ENCODE measurements at regions of chr6 and their contacts with region 1.

Region 1: DNA sequence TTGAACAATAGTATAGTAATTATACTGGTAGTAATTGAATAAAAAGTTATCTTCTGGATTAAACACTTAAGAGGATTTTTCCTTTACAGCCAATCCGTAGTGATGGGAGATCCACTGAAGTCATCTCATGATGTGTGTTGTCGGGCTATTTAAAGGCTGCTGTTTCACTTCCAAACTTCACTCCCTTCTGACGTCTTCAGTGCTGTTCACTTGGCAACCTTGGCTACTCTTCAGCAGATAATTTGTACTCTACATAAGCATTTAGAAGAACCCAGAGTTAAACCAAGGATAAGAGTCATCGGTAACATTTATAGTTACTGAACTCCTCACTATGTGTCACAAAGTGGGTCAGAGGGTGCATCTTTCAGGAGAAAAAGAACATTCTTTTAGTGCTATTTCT is 179.1 kb upstream of the EYA4 start:
- DNase-seq: no peak
- ATAC-seq: peak; percentile 95

Region 2: GRCh38 chr6:132456700-132457143 is 605.4 kb before region 1 on chr6:
- intact Hi-C with region 1: no loop called
- DNase-seq: peak; percentile 66
- ATAC-seq: peak; percentile 94

Region 3: GRCh38 chr6:132962936-132963868 is 98.9 kb before region 1 on chr6:
- intact Hi-C with region 1: loop called (anchors 10 kb)
- DNase-seq: peak; percentile 75
- ATAC-seq: peak; percentile 90

Region 4: DNA sequence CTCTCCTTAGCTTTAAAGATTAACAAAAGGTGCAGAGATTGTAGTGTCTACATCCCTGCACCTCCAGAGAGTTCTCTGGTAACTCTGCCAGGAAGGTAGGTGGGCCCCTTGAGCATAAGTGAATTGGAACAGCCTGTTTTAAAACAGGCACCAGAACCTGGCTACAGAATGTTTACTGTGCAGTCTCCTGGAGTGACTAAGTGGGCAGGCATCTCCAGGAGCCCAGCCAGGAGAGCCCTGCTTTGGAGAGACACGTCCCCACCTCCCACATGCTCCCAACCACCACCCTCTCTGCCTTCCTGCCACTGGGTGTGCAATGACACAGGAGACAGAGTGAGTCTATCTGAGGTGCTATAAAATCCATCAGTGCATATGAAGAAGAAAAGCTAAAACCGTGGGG is 68.8 kb after region 1 on chr6:
- intact Hi-C with region 1: loop called (anchors 10 kb)
- DNase-seq: peak; percentile 83
- ATAC-seq: peak; percentile 95

Region 5: GRCh38 chr6:133218852-133219251 is 156.8 kb after region 1 on chr6:
- intact Hi-C with region 1: no loop called
- DNase-seq: no peak
- ATAC-seq: no peak

Measured in Right ventricle myocardium superior (tissue), 1 donor.